ENCODE measurements at regions of chr19 and their contacts with region 1.

Region 1: GRCh38 chr19:10332955-10333757 is at the start of gene RAVER1:
- DNase-seq: peak; percentile 98

Region 2: GRCh38 chr19:10230861-10231611 is 102.1 kb before region 1 on chr19 and contains the start of gene S1PR2:
- CTCF ChIA-PET with region 1: no interaction called
- POLR2A ChIA-PET with region 1: no interaction called
- DNase-seq: peak; percentile 80

Region 3: DNA sequence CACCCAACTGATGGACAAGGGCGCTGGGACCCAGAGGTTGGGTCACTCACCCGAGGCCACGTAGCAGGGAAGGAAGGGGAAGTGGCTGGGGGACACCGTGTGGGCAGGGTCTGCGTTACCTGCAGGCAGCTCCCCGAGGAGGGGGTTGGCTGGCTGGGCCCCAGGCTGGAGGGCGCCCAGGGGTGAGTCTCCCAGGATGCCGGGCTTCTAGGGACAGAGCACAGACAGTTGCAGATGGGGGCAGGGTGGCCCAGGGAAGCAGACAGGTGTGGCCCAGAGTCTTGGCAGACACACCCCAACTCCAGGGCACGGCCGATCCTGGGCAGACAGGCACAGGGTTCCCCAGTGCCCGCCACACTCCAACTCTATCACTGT is 11.8 kb before region 1 on chr19:
- CTCF ChIA-PET with region 1: no interaction called
- POLR2A ChIA-PET with region 1: interaction called, 15 read pairs
- DNase-seq: no peak

Measured in HEK293T (cell line).